SK-N-SH (cell line): ENCODE measurements at regions of chr19 and their contacts with region 1.

Region 1: DNA sequence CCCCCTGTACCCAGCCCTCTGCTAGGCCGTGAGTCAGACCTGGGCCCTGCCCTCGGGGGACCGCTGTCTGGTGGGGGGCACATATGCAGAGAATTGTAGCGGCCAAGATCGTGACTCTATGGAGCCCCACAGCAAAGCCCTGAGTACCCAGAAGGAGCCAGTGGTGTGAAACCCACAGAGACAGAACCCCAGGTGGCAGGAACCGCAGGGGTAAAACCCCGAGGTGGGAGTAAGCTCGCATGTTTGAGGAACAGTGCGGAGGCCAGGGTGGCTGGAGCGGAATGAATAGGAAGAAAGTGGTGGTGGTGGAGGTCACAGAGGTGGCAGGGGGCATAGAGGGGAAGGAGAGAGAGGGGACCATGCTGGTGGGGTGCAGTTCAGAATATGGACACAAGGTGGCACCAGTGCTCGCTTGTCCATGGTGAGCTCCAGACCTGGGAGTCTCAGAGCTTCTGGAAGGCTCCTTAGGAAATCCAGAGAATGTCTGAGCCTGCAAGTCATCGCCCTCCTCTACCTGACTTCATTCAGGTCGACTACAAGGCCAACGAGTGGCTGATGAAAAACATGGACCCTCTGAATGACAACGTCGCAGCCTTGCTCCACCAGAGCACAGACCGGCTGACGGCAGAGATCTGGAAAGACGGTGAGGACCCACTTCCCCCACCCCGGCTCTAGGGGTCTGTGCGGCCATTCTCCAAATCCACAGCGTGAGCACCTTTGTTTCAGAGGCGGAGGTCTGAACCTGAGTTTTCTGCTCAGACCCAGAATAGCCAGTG is 48.9 kb downstream of the MYH14 start:
- DNase-seq: peak; percentile 65
- H3K4me3 ChIP-seq: no peak overlapping the region
- H3K27ac ChIP-seq: no peak overlapping the region
- H3K4me1 ChIP-seq: no peaks in the 10 kb centered on the region
- H3K27me3 ChIP-seq: peaks cover 39% of the 10 kb centered on the region; the same call in 1 of the 2 replicates
- CTCF ChIP-seq: peak; percentile 70
- EP300 ChIP-seq: no peak
- RAD21 ChIP-seq: peak; percentile 66

Region 2: DNA sequence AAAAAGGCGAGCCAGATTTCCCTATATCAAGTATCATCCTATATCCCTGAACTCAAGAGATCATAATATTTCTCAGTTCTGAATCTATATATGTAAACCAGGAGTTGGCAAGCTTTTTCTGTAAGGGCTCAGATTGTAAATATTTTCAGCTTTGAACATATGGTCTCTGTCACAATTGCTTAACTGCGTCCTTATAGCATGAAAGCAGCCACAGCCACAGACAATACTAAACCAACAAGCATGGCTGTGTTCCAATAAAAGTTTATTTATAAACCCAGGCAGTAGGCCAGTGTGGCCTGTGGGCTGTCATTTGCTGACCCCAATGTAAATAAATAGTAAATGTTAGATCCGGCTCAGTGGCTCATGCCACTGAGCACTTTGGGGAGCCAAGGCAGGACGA is 61.1 kb before region 1 on chr19:
- CTCF ChIA-PET with region 1: no interaction called
- POLR2A ChIA-PET with region 1: no interaction called
- DNase-seq: no peak
- H3K4me3 ChIP-seq: no peak overlapping the region
- H3K27ac ChIP-seq: no peak overlapping the region
- H3K4me1 ChIP-seq: no peaks in the 10 kb centered on the region
- H3K27me3 ChIP-seq: peaks cover 56% of the 10 kb centered on the region
- CTCF ChIP-seq: no peak
- EP300 ChIP-seq: no peak
- RAD21 ChIP-seq: no peak

Region 3: GRCh38 chr19:50230379-50231351 is 21.6 kb before region 1 on chr19:
- CTCF ChIA-PET with region 1: no interaction called
- POLR2A ChIA-PET with region 1: no interaction called
- DNase-seq: no peak
- H3K4me3 ChIP-seq: no peak overlapping the region
- H3K27ac ChIP-seq: no peak overlapping the region
- H3K4me1 ChIP-seq: no peaks in the 10 kb centered on the region
- H3K27me3 ChIP-seq: peaks cover 73% of the 10 kb centered on the region
- CTCF ChIP-seq: peak; percentile 40; the same call in 1 of the 2 replicates
- EP300 ChIP-seq: no peak
- RAD21 ChIP-seq: no peak

Region 4: GRCh38 chr19:50266896-50267295 is 14.6 kb after region 1 on chr19:
- CTCF ChIA-PET with region 1: interaction called, 12 read pairs
- POLR2A ChIA-PET with region 1: no interaction called
- DNase-seq: peak; percentile 50
- H3K4me3 ChIP-seq: no peak overlapping the region
- H3K27ac ChIP-seq: no peak overlapping the region
- H3K4me1 ChIP-seq: no peaks in the 10 kb centered on the region
- H3K27me3 ChIP-seq: peaks cover 54% of the 10 kb centered on the region
- CTCF ChIP-seq: no peak
- EP300 ChIP-seq: no peak
- RAD21 ChIP-seq: no peak

Region 5: DNA sequence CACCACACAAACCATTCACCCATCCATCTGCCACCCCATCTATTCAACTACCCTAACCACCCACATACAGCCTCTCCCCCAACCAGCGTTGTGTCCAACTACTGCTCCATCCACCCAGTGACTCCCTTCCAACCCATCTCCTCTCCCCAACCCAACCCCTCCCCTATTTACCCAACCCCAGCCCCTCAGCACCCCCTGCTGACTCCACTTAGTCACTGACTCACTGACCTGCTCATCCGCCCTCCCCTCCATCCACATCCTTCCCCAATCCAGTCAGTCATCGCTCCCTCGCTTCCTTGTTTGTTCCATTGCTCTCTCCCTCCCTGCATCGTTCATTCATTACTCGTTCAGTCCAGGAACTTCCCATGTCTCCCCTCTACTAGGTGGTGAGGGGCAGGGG is 37.7 kb after region 1 on chr19:
- CTCF ChIA-PET with region 1: no interaction called
- POLR2A ChIA-PET with region 1: no interaction called
- DNase-seq: no peak
- H3K4me3 ChIP-seq: no peak overlapping the region
- H3K27ac ChIP-seq: no peak overlapping the region
- H3K4me1 ChIP-seq: no peaks in the 10 kb centered on the region
- H3K27me3 ChIP-seq: peaks cover 21% of the 10 kb centered on the region
- CTCF ChIP-seq: no peak
- EP300 ChIP-seq: no peak
- RAD21 ChIP-seq: no peak